Upper lobe of right lung (tissue), 1 donor: ENCODE measurements at regions of chr12 and their contacts with region 1.

Region 1: DNA sequence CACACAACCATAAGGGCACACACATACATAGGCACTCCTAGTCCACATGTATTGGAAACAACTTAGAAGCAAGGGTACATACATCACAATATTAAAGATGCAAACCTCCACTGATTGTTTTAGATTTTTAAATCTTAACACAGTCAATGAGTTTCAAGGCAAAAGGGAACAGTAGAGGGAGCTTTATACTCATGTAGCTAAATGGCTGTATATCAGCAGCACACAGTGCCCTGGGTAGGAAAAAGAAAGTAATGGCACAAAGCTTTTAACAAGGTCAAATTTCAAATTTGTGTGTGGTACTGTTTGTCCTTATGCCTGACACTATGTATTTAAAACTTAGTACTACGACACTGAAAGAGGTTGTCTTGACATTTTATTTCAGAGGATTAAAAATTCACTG is 262.0 kb downstream of the MED13L start:
- DNase-seq: no peak
- ATAC-seq: peak; percentile 78
- H3K4me3 ChIP-seq: no peak overlapping the region
- H3K27ac ChIP-seq: no peak overlapping the region
- H3K4me1 ChIP-seq: peaks cover 16% of the 10 kb centered on the region
- H3K27me3 ChIP-seq: no peaks in the 10 kb centered on the region
- CTCF ChIP-seq: peak; percentile 62

Region 2: GRCh38 chr12:116236148-116236731 is 220.7 kb after region 1 on chr12:
- intact Hi-C with region 1: loop called (anchors 10 kb)
- DNase-seq: no peak
- ATAC-seq: peak; percentile 70
- H3K4me3 ChIP-seq: no peak overlapping the region
- H3K27ac ChIP-seq: no peak overlapping the region
- H3K4me1 ChIP-seq: peaks cover 41% of the 10 kb centered on the region
- H3K27me3 ChIP-seq: no peaks in the 10 kb centered on the region
- CTCF ChIP-seq: peak; percentile 74